Endothelial cell of umbilical vein (primary cell): ENCODE measurements at regions of chr7 and their contacts with region 1.

Region 1: DNA sequence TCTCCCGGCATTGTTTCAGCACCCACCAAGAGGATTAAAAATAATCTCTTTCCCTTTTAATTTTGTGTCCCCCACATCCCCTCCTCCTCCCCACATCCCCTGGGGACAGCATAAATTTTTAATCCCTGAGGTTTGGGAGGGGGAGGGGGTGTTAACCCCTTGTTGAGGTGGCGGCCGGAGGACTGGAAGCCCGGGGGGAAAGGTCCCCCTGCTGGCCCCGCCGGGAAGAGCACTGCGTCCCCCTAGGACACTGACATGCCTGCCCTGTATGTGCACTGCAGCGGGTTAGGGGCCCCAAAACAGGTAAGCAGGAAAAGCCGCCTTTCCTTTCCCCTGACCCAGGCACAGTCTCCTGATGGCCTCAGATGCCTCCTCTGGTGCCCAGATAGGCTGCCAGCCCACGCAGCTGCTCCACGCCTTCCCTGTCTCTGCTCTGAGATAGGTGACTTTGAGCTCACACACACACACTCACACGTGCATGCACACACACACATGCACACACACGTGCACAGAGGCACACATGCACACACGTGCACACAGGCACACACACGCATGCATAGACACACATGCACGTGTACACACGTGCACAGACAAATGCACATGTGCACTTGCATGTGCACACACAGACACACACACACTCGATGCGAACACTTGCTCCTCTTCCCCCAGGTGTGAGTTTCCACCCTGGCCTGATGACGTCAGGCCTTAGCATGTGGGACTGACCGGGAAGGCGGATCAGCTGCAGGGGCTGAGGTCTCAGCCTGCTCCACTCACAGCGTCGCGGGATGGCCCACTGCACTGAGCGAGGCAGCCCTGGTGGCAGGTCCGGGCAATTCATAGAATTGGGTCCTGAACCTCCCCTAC is 12.3 kb downstream of the CNPY1 start:
- DNase-seq: peak; percentile 20
- H3K4me3 ChIP-seq: no peak overlapping the region
- H3K27ac ChIP-seq: no peak overlapping the region
- H3K4me1 ChIP-seq: no peaks in the 10 kb centered on the region
- H3K27me3 ChIP-seq: peaks cover 28 to 31% of the 10 kb centered on the region in 2 experiments
- CTCF ChIP-seq: peak; percentile 41 to 80
- POLR2A ChIP-seq: no peak

Region 2: DNA sequence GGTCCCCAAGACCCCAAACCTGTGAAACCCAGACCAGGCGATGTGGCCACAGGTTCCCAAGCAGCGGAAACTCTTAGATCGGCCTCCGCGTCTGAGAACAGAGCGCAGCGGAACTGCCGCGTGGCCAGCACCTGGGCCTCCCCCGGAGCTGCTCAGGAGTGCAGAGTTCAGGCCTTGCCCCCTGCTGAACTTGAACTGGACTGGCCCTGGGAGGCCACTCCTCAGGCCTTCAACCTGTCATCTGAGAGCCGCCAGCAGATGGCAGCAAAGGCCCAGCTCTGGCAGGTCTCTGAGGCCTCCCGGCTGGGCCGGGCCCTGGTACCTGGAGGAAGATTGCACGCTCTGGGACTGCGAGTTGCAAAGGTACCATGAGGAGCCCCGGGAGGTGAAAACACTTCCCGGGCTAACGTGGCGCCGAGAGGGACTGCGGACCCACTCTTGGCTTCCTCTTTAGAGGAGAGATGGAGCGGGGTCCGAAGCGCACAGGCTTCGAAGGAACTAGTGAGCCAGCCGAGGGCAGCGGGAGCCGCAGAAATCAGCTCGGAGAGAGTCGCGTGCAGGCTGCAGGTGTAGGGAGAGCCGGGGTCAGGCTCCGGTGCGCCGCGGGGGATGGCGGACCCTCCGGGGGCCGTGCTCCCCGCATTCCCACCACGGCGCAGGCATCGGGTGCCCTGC is 620.3 kb before region 1 on chr7:
- CTCF ChIA-PET with region 1: no interaction called
- POLR2A ChIA-PET with region 1: no interaction called
- dilution Hi-C with region 1: no loop called
- intact Hi-C with region 1: loop called (anchors 5 kb)
- DNase-seq: peak; percentile 67
- H3K4me3 ChIP-seq: peak overlapping the region in 2 of 3 experiments; percentile 1 to 27
- H3K27ac ChIP-seq: no peak overlapping the region
- H3K4me1 ChIP-seq: peaks cover 4% of the 10 kb centered on the region
- H3K27me3 ChIP-seq: peaks cover 0 to 11% of the 10 kb centered on the region in 2 experiments
- CTCF ChIP-seq: peak; percentile 82 to 94
- POLR2A ChIP-seq: no peak

Region 3: GRCh38 chr7:155090684-155091083 is 443.4 kb before region 1 on chr7:
- CTCF ChIA-PET with region 1: no interaction called
- POLR2A ChIA-PET with region 1: no interaction called
- dilution Hi-C with region 1: no loop called
- intact Hi-C with region 1: no loop called
- DNase-seq: no peak
- H3K4me3 ChIP-seq: no peak overlapping the region
- H3K27ac ChIP-seq: no peak overlapping the region
- H3K4me1 ChIP-seq: no peaks in the 10 kb centered on the region
- H3K27me3 ChIP-seq: no peaks in the 10 kb centered on the region
- CTCF ChIP-seq: no peak
- POLR2A ChIP-seq: no peak

Region 4: GRCh38 chr7:155412537-155413253 is 121.4 kb before region 1 on chr7:
- CTCF ChIA-PET with region 1: no interaction called
- POLR2A ChIA-PET with region 1: no interaction called
- dilution Hi-C with region 1: no loop called
- intact Hi-C with region 1: loop called (anchors 5 kb)
- DNase-seq: peak; percentile 23
- H3K4me3 ChIP-seq: no peak overlapping the region
- H3K27ac ChIP-seq: no peak overlapping the region
- H3K4me1 ChIP-seq: no peaks in the 10 kb centered on the region
- H3K27me3 ChIP-seq: no peaks in the 10 kb centered on the region
- CTCF ChIP-seq: peak; percentile 50 to 72
- POLR2A ChIP-seq: no peak

Region 5: DNA sequence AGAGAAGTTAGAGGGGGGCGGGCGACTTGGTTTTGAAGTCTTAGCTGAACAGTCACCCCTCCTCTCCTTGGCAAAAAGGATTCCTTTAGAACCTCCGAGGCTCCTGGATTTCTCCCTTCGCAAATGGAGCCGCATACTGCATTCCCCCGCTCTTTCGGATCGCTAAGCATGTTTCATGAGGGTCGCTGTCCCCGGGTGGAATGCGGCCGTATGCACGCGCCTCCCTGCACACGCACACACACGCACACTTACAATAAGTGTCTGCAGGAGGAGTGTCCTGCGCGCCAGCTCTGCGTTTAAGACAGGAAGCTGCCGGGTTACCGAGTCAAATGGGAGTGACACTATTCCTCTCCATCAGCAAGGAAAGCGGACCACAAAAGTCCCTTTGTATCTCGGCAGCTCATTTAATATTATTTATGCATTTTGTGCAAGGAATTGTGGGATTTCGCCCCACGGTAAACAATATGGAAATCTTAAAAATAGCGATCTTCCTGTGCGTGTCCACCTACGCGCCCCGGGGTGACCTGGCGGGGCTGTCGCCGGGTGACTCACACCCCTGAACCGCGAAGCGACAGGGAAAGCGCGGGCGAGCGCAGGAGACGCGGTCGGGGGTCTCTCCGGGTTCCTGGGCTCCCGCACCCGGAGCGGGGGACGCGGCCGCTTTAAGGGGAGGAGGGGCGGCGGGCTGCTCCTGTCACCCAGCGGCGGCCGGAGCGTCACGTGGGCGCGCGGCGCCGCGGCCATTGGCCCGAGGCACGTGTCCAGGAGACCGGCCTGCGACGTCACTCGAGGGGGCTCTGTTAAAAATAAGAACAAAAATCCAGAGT is 77.1 kb before region 1 on chr7:
- CTCF ChIA-PET with region 1: no interaction called
- POLR2A ChIA-PET with region 1: no interaction called
- dilution Hi-C with region 1: no loop called
- intact Hi-C with region 1: loop called (anchors 5 kb)
- DNase-seq: peak; percentile 49
- H3K4me3 ChIP-seq: peak overlapping the region in 2 of 3 experiments; percentile 27 to 34
- H3K27ac ChIP-seq: no peak overlapping the region
- H3K4me1 ChIP-seq: no peaks in the 10 kb centered on the region
- H3K27me3 ChIP-seq: peaks cover 78 to 94% of the 10 kb centered on the region in 2 experiments
- CTCF ChIP-seq: no peak
- POLR2A ChIP-seq: no peak

Region 6: GRCh38 chr7:155553871-155554270 is 19.8 kb after region 1 on chr7:
- CTCF ChIA-PET with region 1: no interaction called
- POLR2A ChIA-PET with region 1: no interaction called
- dilution Hi-C with region 1: no loop called
- intact Hi-C with region 1: no loop called
- DNase-seq: no peak
- H3K4me3 ChIP-seq: no peak overlapping the region
- H3K27ac ChIP-seq: no peak overlapping the region
- H3K4me1 ChIP-seq: no peaks in the 10 kb centered on the region
- H3K27me3 ChIP-seq: no peaks in the 10 kb centered on the region
- CTCF ChIP-seq: no peak
- POLR2A ChIP-seq: no peak